Activated CD8-positive, alpha-beta T cell treated with anti-CD3 and anti-CD28 coated beads for 36 hours (primary cell): ENCODE measurements at regions of chrX and their contacts with region 1.

Region 1: GRCh38 chrX:132292793-132293192 is 73.5 kb upstream of the RAP2C start:
- DNase-seq: peak; percentile 13
- ATAC-seq: no peak
- H3K4me3 Mint-ChIP-seq: no peak overlapping the region
- H3K27ac Mint-ChIP-seq: no peak overlapping the region
- H3K4me1 Mint-ChIP-seq: no peaks in the 10 kb centered on the region
- H3K27me3 Mint-ChIP-seq: no peaks in the 10 kb centered on the region
- CTCF ChIP-seq: peak; percentile 62

Region 2: GRCh38 chrX:132270699-132271098 is 22.1 kb before region 1 on chrX:
- CTCF ChIA-PET with region 1: interaction called, 14 read pairs
- POLR2A ChIA-PET with region 1: no interaction called
- intact Hi-C with region 1: no loop called
- DNase-seq: no peak
- ATAC-seq: no peak
- H3K4me3 Mint-ChIP-seq: no peak overlapping the region
- H3K27ac Mint-ChIP-seq: no peak overlapping the region
- H3K4me1 Mint-ChIP-seq: peaks cover 23% of the 10 kb centered on the region
- H3K27me3 Mint-ChIP-seq: no peaks in the 10 kb centered on the region
- CTCF ChIP-seq: no peak

Region 3: DNA sequence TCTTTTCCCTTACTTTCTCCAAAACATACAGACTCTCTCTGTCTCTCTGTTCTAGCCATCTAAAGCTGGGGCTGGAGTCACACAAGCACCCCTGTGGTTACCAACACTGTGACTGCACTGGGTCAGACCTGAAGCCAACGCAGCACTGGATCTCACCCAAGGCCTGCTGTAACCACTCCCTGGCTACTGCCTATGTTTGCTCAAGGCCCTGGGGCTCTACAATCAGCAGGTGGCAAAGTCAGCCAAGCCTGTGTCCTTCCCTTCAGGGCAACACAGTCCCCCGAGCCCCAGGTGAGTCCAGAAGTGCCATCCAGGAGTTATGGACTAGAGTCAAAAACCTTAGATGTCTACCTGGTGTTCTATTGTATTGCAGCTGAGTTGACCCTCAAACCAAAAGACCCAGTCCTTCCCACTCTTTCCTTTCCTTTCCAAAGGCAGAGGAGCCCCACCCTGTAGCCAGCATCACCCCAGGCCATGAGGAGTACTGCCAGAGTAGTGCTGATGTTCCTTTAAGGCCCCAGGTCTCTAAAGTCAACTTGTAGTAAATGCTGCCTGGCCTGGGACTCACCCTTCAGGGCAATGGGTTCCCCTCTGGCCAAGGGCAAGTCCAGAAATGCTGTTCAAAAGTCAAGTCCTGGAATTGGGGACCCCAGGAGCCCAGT is 14.7 kb before region 1 on chrX:
- CTCF ChIA-PET with region 1: interaction called, 12 read pairs
- POLR2A ChIA-PET with region 1: no interaction called
- intact Hi-C with region 1: no loop called
- DNase-seq: no peak
- ATAC-seq: no peak
- H3K4me3 Mint-ChIP-seq: no peak overlapping the region
- H3K27ac Mint-ChIP-seq: no peak overlapping the region
- H3K4me1 Mint-ChIP-seq: no peaks in the 10 kb centered on the region
- H3K27me3 Mint-ChIP-seq: no peaks in the 10 kb centered on the region
- CTCF ChIP-seq: no peak

Region 4: DNA sequence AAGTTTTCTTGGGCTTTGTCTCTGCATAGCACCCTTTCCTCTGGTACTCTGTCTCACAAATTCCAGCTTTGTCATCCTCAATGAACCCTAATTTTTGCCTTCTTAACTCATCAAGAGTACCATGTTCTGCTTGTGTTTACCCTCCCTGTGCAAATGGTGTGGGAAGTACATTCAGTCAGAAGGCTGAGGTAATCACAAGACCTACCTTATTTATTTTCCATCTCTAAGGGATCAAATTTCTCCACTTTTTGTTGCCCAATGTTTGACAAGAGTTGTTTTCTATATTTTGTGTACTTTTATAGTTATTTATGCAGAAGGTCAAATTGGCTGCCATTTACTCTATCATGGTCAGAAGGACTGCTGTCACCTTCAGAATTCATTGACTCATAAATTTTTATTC is 11.8 kb after region 1 on chrX:
- CTCF ChIA-PET with region 1: interaction called, 15 read pairs
- POLR2A ChIA-PET with region 1: no interaction called
- intact Hi-C with region 1: no loop called
- DNase-seq: no peak
- ATAC-seq: no peak
- H3K4me3 Mint-ChIP-seq: no peak overlapping the region
- H3K27ac Mint-ChIP-seq: no peak overlapping the region
- H3K4me1 Mint-ChIP-seq: no peaks in the 10 kb centered on the region
- H3K27me3 Mint-ChIP-seq: no peaks in the 10 kb centered on the region
- CTCF ChIP-seq: no peak

Region 5: GRCh38 chrX:132615391-132616131 is 322.8 kb after region 1 on chrX:
- CTCF ChIA-PET with region 1: interaction called, 46 read pairs
- POLR2A ChIA-PET with region 1: no interaction called
- intact Hi-C with region 1: loop called (anchors 5 kb)
- DNase-seq: peak; percentile 62
- ATAC-seq: peak; percentile 60
- H3K4me3 Mint-ChIP-seq: no peak overlapping the region
- H3K27ac Mint-ChIP-seq: no peak overlapping the region
- H3K4me1 Mint-ChIP-seq: no peaks in the 10 kb centered on the region
- H3K27me3 Mint-ChIP-seq: no peaks in the 10 kb centered on the region
- CTCF ChIP-seq: peak; percentile 49

Region 6: DNA sequence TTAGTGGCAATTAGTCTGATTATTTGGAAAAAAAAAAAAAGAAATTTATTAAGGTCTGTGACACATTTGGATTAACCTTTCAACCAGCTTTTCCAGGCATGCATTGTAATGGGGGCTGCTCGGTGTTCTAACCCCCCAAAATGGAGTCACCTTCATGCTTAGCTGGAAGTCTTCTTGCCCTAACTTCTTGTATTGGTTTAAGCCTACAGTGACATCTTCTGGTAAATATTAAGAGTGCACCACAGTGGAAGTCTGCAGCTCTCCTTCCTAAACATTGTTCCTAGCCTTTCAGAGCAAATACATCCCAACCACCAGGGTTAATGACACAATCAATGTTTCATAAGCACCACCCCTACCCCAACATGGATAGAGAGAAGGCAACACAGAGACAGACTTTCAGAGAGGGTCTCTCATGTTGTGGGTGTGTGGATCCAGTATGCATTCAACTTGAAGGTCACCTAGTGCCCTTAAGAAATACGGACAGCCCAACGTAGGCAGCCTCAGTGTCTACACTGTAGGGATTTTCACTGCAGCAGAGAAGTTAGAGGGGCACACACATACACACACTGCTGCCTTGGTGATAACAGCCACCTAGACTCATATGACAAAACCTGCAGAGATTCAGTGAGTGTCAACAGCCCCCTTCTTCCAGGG is 338.9 kb after region 1 on chrX:
- CTCF ChIA-PET with region 1: interaction called, 18 read pairs
- POLR2A ChIA-PET with region 1: no interaction called
- intact Hi-C with region 1: no loop called
- DNase-seq: no peak
- ATAC-seq: peak; percentile 66
- H3K4me3 Mint-ChIP-seq: no peak overlapping the region
- H3K27ac Mint-ChIP-seq: no peak overlapping the region
- H3K4me1 Mint-ChIP-seq: no peaks in the 10 kb centered on the region
- H3K27me3 Mint-ChIP-seq: no peaks in the 10 kb centered on the region
- CTCF ChIP-seq: peak; percentile 35